ENCODE measurements at regions of chr12 and their contacts with region 1.

Region 1: DNA sequence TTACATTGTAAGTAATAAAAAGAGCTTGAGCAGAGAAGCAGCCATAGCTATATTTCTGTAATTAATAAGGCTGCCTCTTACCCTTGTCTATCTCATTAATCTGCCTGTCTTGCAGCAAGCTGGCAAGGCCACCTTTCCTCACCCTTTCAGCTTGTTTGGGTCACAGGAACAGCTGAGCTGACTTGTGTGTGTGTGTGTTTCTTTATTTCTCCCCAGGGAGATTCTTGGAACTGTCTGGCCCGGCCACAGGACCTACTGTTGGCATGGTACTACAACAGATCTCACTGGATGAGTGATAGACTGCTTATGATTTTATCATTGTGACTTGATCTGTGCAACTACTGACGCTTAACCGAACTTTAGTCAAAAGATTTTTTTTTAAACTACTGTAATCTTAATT is 213.7 kb downstream of the SLC2A13 start:
- DNase-seq: no peak
- H3K4me3 ChIP-seq: no peak overlapping the region
- H3K27ac ChIP-seq: no peak overlapping the region
- H3K4me1 ChIP-seq: peaks cover 8% of the 10 kb centered on the region
- H3K27me3 ChIP-seq: no peaks in the 10 kb centered on the region
- CTCF ChIP-seq: no peak

Region 2: GRCh38 chr12:39807043-39807442 is 85.1 kb before region 1 on chr12:
- intact Hi-C with region 1: loop called (anchors 10 kb)
- DNase-seq: no peak
- H3K4me3 ChIP-seq: no peak overlapping the region
- H3K27ac ChIP-seq: no peak overlapping the region
- H3K4me1 ChIP-seq: no peaks in the 10 kb centered on the region
- H3K27me3 ChIP-seq: no peaks in the 10 kb centered on the region
- CTCF ChIP-seq: no peak

Region 3: GRCh38 chr12:39946361-39946948 is 54.3 kb after region 1 on chr12:
- intact Hi-C with region 1: no loop called
- DNase-seq: no peak
- H3K4me3 ChIP-seq: no peak overlapping the region
- H3K27ac ChIP-seq: no peak overlapping the region
- H3K4me1 ChIP-seq: no peaks in the 10 kb centered on the region
- H3K27me3 ChIP-seq: no peaks in the 10 kb centered on the region
- CTCF ChIP-seq: no peak

Region 4: GRCh38 chr12:40002178-40003169 is 110.3 kb after region 1 on chr12:
- intact Hi-C with region 1: no loop called
- DNase-seq: no peak
- H3K4me3 ChIP-seq: no peak overlapping the region
- H3K27ac ChIP-seq: no peak overlapping the region
- H3K4me1 ChIP-seq: no peaks in the 10 kb centered on the region
- H3K27me3 ChIP-seq: no peaks in the 10 kb centered on the region
- CTCF ChIP-seq: no peak

Measured in left ventricle myocardium inferior (tissue), 1 donor.